Common myeloid progenitor, CD34-positive (primary cell): ENCODE measurements at regions of chr12 and their contacts with region 1.

Region 1: GRCh38 chr12:2035431-2036055 is 17.2 kb upstream of the CACNA1C start:
- DNase-seq: no peak
- H3K4me3 ChIP-seq: peak overlapping the region in 5 of 7 experiments; percentile 7 to 73 (median 37)
- H3K27ac ChIP-seq: no peak overlapping the region
- H3K4me1 ChIP-seq: peaks cover 4 to 14% (median 9%) of the 10 kb centered on the region in 4 experiments
- H3K27me3 ChIP-seq: peaks cover 0 to 19% (median 0%) of the 10 kb centered on the region in 5 experiments

Region 2: GRCh38 chr12:2051700-2052621 is 16.4 kb after region 1 on chr12:
- CTCF ChIA-PET with region 1: interaction called, 19 read pairs
- POLR2A ChIA-PET with region 1: no interaction called
- DNase-seq: peak in 1 of 3 donors; percentile 32
- H3K4me3 ChIP-seq: peak overlapping the region in 6 of 7 experiments; percentile 45 to 71 (median 60)
- H3K27ac ChIP-seq: no peak overlapping the region
- H3K4me1 ChIP-seq: peaks cover 0 to 27% (median 20%) of the 10 kb centered on the region in 4 experiments
- H3K27me3 ChIP-seq: peaks cover 11 to 51% (median 28%) of the 10 kb centered on the region in 5 experiments